ENCODE measurements at regions of chr12 and their contacts with region 1.

Region 1: DNA sequence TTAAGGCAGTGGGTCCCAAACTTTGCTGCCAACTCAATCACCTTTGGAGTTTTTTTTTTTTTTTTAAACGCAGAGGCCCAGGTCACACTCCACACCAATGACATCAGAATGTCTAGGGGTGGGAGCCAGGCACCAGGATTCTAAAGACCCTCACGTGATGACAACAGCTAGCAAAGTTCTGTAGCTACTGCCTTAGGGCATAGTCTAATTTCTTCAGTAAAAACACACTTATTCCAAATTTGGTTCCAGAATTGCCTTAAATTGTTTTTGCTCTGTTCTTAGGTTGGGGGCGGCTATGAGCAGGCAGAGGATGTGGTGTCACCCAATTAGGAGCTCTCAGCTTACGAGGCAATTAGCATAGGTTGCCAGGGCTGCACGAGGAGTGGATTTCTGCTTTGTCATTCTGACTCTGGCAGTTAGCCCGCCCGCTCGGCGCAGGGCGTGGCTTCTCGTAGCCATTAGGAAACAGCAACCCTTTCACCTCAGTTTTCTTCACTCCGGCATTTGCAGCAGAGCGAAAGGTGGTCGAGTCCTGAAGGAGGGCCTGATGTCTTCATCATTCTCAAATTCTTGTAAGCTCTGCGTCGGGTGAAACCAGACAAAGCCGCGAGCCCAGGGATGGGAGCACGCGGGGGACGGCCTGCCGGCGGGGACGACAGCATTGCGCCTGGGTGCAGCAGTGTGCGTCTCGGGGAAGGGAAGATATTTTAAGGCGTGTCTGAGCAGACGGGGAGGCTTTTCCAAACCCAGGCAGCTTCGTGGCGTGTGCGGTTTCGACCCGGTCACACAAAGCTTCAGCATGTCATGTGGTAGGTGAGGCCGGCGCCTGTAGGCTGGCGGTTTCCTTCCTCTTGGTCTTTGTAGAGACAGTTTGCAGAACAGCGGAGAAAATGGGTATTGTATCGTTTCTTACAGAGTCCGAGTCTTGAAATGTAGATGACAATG is 16.7 kb upstream of the EID3 start:
- DNase-seq: peak; percentile 72 to 90 (median 87)
- ATAC-seq: peak; percentile 93
- H3K4me3 ChIP-seq: peak overlapping the region; percentile 73
- H3K4me3 Mint-ChIP-seq: peak overlapping the region; percentile 86 to 100 (median 98)
- H3K27ac ChIP-seq: peak overlapping the region; percentile 66
- H3K27ac Mint-ChIP-seq: peak overlapping the region; percentile 85 to 99 (median 94)
- H3K4me1 ChIP-seq: peaks cover 18 to 19% of the 10 kb centered on the region in 2 donors
- H3K4me1 Mint-ChIP-seq: peaks cover 14 to 40% (median 34%) of the 10 kb centered on the region in 7 donors
- H3K27me3 ChIP-seq: no peaks in the 10 kb centered on the region
- H3K27me3 Mint-ChIP-seq: peaks cover 0 to 1% (median 0%) of the 10 kb centered on the region in 5 donors

Region 2: DNA sequence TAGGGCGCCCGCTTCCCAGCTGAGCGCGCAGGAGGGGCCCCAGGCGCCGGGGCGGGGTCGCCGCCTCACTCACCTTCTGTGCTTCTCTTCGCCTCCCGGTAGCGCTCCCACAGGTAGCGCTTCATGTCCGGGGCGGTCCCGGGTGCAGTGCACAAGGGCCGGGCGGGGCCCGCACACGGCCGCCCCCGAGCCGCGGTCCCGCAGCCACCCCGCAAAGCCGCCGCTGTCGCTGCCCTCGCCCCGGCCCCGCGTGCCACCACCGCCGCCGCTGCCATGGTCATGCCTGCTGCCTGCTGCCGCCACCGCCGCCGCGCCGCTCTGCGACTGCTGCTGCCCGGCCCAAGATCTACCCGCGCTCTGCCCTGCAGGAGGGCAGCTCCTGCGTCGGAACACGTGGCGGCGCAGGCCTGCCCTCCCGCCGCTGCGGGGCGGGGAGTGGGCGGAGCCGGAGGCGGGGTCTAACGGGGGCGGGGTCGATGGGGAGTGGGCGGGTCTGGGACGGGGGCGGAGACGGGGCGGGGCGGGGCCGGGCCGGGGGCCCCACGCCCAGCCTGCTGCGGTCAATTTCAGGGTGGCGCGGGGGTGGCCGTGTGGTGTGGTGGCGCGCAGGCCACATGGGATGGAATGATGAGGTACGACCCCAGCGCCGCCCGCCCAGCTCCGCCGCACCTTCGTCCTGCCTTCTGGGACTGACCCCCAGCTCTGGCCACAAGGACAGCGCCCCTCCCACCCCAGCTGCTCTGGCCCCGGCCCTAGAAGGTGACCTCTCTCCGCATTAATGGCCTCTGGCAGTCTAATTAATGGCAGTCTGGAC is 445.7 kb before region 1 on chr12 and contains the start of gene NT5DC3:
- CTCF ChIA-PET with region 1: no interaction called
- POLR2A ChIA-PET with region 1: no interaction called
- intact Hi-C with region 1: loop called (anchors 2 kb)
- DNase-seq: peak; percentile 77 to 93 (median 87)
- ATAC-seq: peak; percentile 98
- H3K4me3 ChIP-seq: peak within 1 kb of the TSS; percentile 68
- H3K4me3 Mint-ChIP-seq: peak within 1 kb of the TSS; percentile 80 to 92 (median 86)
- H3K27ac ChIP-seq: peak within 1 kb of the TSS; percentile 55
- H3K27ac Mint-ChIP-seq: peak within 1 kb of the TSS in 8 of 9 donors; percentile 61 to 89 (median 76)
- H3K4me1 ChIP-seq: peaks cover 7 to 9% of the 10 kb centered on the region in 2 donors
- H3K4me1 Mint-ChIP-seq: peaks cover 5 to 26% (median 18%) of the 10 kb centered on the region in 7 donors
- H3K27me3 ChIP-seq: no peaks in the 10 kb centered on the region
- H3K27me3 Mint-ChIP-seq: peaks cover 0 to 35% (median 0%) of the 10 kb centered on the region in 5 donors
- total RNA-seq, gene NT5DC3: 3.9 to 5.0 (median 4.5) TPM

Region 3: DNA sequence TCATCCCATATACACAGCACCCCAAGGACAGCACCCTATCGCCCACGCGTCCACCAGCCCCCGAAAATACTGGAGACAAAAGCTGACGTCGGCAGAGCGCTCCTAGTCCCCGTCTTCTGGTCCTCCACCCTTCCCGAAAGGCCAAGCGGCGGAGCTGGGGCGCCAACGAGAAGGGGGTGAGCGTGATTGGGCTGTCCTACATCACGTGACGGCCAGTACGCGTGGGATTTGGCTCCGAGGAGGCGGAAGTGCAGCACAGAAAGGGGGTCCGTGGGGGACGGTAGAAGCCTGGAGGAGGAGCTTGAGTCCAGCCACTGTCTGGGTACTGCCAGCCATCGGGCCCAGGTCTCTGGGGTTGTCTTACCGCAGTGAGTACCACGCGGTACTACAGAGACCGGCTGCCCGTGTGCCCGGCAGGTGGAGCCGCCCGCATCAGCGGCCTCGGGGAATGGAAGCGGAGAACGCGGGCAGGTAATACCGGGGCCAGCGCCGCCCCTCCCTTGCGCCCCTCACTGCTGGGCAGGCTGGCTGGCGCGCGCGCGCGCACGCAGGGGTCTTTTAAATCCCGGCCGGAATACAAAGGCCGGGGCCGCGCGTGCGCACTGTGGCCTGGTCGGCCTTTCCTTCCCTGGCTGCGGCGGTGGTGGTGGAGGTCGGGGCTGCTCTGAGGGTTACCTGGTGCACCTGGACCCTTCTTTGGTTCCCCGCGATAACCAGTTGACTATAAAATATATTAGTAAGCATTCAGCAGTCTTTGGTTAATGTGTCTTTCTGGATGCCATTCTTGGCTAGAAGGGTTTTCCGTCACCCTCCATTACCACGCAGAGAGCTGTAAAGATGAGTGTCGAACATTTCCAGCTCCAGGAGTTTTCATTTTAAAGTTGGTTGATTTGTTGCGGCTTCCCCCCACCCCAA is 321.0 kb before region 1 on chr12 and contains the start of gene TDG:
- CTCF ChIA-PET with region 1: no interaction called
- POLR2A ChIA-PET with region 1: interaction called, 4 read pairs
- intact Hi-C with region 1: loop called in 1 of 2 experiments (anchors 5 kb)
- DNase-seq: peak; percentile 81 to 97 (median 95)
- ATAC-seq: peak; percentile 97
- H3K4me3 ChIP-seq: peak within 1 kb of the TSS; percentile 87
- H3K4me3 Mint-ChIP-seq: peak within 1 kb of the TSS; percentile 92 to 99 (median 97)
- H3K27ac ChIP-seq: peak within 1 kb of the TSS; percentile 94
- H3K27ac Mint-ChIP-seq: peak within 1 kb of the TSS; percentile 96 to 100 (median 99)
- H3K4me1 ChIP-seq: peaks cover 31 to 41% of the 10 kb centered on the region in 2 donors
- H3K4me1 Mint-ChIP-seq: peaks cover 34 to 68% (median 57%) of the 10 kb centered on the region in 7 donors
- H3K27me3 ChIP-seq: no peaks in the 10 kb centered on the region
- H3K27me3 Mint-ChIP-seq: no peaks in the 10 kb centered on the region
- total RNA-seq, gene TDG: 21.5 to 43.0 (median 35.5) TPM

Region 4: GRCh38 chr12:104215638-104216297 is 71.0 kb before region 1 on chr12 and contains the start of gene TXNRD1:
- CTCF ChIA-PET with region 1: interaction called, 7 read pairs
- POLR2A ChIA-PET with region 1: interaction called, 5 read pairs
- intact Hi-C with region 1: loop called (anchors 1 kb)
- DNase-seq: peak; percentile 70 to 84 (median 81)
- ATAC-seq: peak; percentile 97
- H3K4me3 ChIP-seq: peak within 1 kb of the TSS; percentile 69
- H3K4me3 Mint-ChIP-seq: peak within 1 kb of the TSS; percentile 79 to 89 (median 84)
- H3K27ac ChIP-seq: peak within 1 kb of the TSS; percentile 64
- H3K27ac Mint-ChIP-seq: peak within 1 kb of the TSS; percentile 64 to 86 (median 72)
- H3K4me1 ChIP-seq: peaks cover 0 to 5% of the 10 kb centered on the region in 2 donors
- H3K4me1 Mint-ChIP-seq: peaks cover 15 to 41% (median 26%) of the 10 kb centered on the region in 7 donors
- H3K27me3 ChIP-seq: no peaks in the 10 kb centered on the region
- H3K27me3 Mint-ChIP-seq: peaks cover 0 to 8% (median 0%) of the 10 kb centered on the region in 5 donors
- total RNA-seq, gene TXNRD1: 19.1 to 73.5 (median 41.7) TPM

Region 5: GRCh38 chr12:104319918-104320626 is 33.3 kb after region 1 on chr12:
- CTCF ChIA-PET with region 1: no interaction called
- POLR2A ChIA-PET with region 1: no interaction called
- intact Hi-C with region 1: loop called in 1 of 2 experiments (anchors 5 kb)
- DNase-seq: no peak
- ATAC-seq: no peak
- H3K4me3 ChIP-seq: no peak overlapping the region
- H3K4me3 Mint-ChIP-seq: no peak overlapping the region
- H3K27ac ChIP-seq: no peak overlapping the region
- H3K27ac Mint-ChIP-seq: no peak overlapping the region
- H3K4me1 ChIP-seq: no peaks in the 10 kb centered on the region
- H3K4me1 Mint-ChIP-seq: peaks cover 0 to 8% (median 0%) of the 10 kb centered on the region in 7 donors
- H3K27me3 ChIP-seq: no peaks in the 10 kb centered on the region
- H3K27me3 Mint-ChIP-seq: no peaks in the 10 kb centered on the region

Region 6: GRCh38 chr12:104462931-104463339 is 176.1 kb after region 1 on chr12:
- CTCF ChIA-PET with region 1: no interaction called
- POLR2A ChIA-PET with region 1: interaction called, 9 read pairs
- intact Hi-C with region 1: loop called in 1 of 2 experiments (anchors 2 kb)
- DNase-seq: peak in 7 of 9 donors; percentile 41 to 68 (median 51)
- ATAC-seq: peak; percentile 71
- H3K4me3 ChIP-seq: peak overlapping the region; percentile 12
- H3K4me3 Mint-ChIP-seq: peak overlapping the region; percentile 68 to 90 (median 85)
- H3K27ac ChIP-seq: peak overlapping the region; percentile 68
- H3K27ac Mint-ChIP-seq: peak overlapping the region; percentile 63 to 98 (median 93)
- H3K4me1 ChIP-seq: peaks cover 76 to 77% of the 10 kb centered on the region in 2 donors
- H3K4me1 Mint-ChIP-seq: peaks cover 60 to 93% (median 78%) of the 10 kb centered on the region in 7 donors
- H3K27me3 ChIP-seq: no peaks in the 10 kb centered on the region
- H3K27me3 Mint-ChIP-seq: no peaks in the 10 kb centered on the region

Region 7: DNA sequence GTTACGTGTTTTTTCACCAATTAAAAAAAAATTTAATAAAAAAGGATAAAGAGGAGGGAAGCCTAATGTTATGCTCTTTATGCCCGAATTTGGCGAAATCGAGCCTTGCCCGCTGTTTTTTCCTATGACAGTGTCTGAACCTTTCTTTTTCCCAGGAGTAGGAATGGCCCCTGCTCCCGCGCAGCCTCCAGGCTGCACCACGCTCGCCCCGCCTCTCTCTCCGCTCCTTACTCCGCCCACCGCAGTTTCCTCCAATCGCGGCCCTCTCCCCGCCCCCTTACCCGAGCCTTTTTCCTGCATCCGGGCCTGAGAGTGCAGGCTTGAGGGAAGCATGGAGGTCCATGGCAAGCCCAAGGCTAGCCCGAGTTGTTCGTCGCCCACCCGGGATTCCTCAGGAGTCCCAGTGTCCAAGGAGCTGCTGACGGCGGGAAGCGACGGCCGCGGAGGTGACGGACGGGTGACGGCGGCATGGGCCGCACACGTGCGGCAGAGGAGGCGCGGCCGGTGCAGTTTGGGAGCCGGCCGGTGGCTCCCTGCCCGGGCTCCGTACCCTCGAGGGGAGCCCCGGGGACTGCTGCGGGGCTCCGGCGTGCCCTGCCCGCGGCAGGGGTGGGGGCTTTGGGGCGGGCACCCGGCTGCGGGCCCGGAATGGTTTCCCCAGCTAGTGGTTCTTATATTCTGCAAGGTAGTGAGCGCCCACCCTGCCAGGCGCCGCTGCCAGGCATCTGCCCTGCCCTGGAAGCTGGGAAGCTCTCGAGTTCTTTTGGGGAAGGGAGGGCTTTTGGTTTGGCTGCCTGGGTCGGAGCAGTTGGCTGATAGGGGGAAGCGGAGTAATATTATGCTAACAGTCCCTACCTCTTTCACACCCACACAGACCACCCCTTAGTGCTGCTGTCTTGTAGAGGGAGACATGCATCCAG is 699.5 kb after region 1 on chr12 and contains the start of gene NOPCHAP1:
- CTCF ChIA-PET with region 1: no interaction called
- POLR2A ChIA-PET with region 1: no interaction called
- intact Hi-C with region 1: loop called (anchors 1 to 2 kb)
- DNase-seq: peak; percentile 64 to 84 (median 78)
- ATAC-seq: peak; percentile 100
- H3K4me3 ChIP-seq: peak within 1 kb of the TSS; percentile 91
- H3K4me3 Mint-ChIP-seq: peak within 1 kb of the TSS; percentile 90 to 95 (median 94)
- H3K27ac ChIP-seq: peak within 1 kb of the TSS; percentile 73
- H3K27ac Mint-ChIP-seq: peak within 1 kb of the TSS; percentile 63 to 87 (median 74)
- H3K4me1 ChIP-seq: peaks cover 12 to 13% of the 10 kb centered on the region in 2 donors
- H3K4me1 Mint-ChIP-seq: peaks cover 19 to 47% (median 37%) of the 10 kb centered on the region in 7 donors
- H3K27me3 ChIP-seq: no peaks in the 10 kb centered on the region
- H3K27me3 Mint-ChIP-seq: peaks cover 0 to 13% (median 5%) of the 10 kb centered on the region in 5 donors
- total RNA-seq, gene NOPCHAP1: 10.5 to 18.0 (median 15.2) TPM